ENCODE measurements at regions of chrX and their contacts with region 1.

Region 1: GRCh38 chrX:154358011-154358567 is 16.3 kb downstream of the FLNA start:
- DNase-seq: no peak
- ATAC-seq: no peak
- H3K4me3 ChIP-seq: no peak overlapping the region
- H3K27ac ChIP-seq: no peak overlapping the region
- H3K4me1 ChIP-seq: peaks cover 18% of the 10 kb centered on the region
- H3K27me3 ChIP-seq: no peaks in the 10 kb centered on the region
- CTCF ChIP-seq: no peak
- EP300 ChIP-seq: no peak
- POLR2A ChIP-seq: no peak
- RAD21 ChIP-seq: no peak

Region 2: DNA sequence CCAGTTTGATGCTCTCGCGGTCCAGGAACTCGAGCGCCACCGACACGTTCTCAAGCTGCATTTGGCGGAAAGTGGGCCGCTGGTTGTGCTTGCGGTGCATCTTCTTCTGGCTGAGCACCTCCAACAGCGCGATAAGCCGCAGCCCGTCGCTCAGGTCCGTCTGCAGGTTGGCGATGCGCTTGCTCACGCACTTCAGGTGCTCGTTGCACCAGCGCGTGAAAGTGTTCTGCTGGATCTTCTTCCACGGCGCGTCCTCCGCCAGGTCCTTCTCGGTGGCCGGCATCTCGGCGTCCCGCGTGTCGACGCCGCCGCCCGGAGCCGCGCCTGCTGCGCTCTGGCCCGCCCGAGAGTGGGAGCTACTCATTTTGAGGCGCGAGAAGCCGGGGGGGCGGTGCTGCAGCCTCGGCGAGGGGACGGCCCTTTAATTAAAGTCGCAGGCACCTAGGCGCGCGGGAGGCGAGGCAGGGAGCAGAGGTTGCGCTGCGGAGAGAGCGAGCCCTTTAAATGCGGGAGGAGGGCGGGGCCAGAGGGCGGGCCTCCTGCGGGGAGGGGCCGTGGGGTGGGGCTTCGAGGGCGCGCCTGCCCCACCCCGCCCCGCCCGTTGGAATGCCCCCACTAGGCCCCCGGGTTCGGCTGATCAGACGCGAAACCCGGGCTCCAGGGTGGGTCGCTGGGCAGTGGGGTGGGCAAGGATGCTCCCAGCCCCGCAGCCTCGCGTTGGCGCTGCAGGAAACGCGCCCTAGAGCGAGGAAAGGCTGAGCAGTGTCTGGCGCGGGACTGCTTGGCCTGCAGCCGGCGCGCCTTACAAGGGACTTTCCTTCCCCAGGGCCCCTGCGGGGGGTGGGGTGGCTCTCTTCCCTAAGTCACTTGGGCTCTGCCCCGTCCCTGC is 13.0 kb after region 1 on chrX:
- CTCF ChIA-PET with region 1: no interaction called
- POLR2A ChIA-PET with region 1: interaction called, 3 read pairs
- in situ Hi-C with region 1: no loop called
- intact Hi-C with region 1: loop called (anchors 1 kb)
- DNase-seq: peak; percentile 85
- ATAC-seq: peak; percentile 57
- H3K4me3 ChIP-seq: peak overlapping the region; percentile 65 to 92 (median 80)
- H3K27ac ChIP-seq: peak overlapping the region; percentile 58
- H3K4me1 ChIP-seq: peaks cover 37% of the 10 kb centered on the region
- H3K27me3 ChIP-seq: no peaks in the 10 kb centered on the region
- CTCF ChIP-seq: peak; percentile 25; the same call in 1 of the 2 replicates
- EP300 ChIP-seq: no peak
- POLR2A ChIP-seq: peak in 1 of 2 experiments; percentile 89; a peak in 2 of 4 replicates
- RAD21 ChIP-seq: no peak

Measured in HepG2 (cell line).